CD8-positive, alpha-beta T cell (primary cell): ENCODE measurements at regions of chr7 and their contacts with region 1.

Region 1: GRCh38 chr7:30041521-30042269 is 13.5 kb downstream of the PLEKHA8 start:
- DNase-seq: no peak
- ATAC-seq: no peak
- H3K4me3 ChIP-seq: no peak overlapping the region
- H3K4me3 Mint-ChIP-seq: no peak overlapping the region
- H3K27ac ChIP-seq: no peak overlapping the region
- H3K27ac Mint-ChIP-seq: peak overlapping the region; percentile 12
- H3K4me1 ChIP-seq: no peaks in the 10 kb centered on the region
- H3K4me1 Mint-ChIP-seq: peaks cover 17% of the 10 kb centered on the region
- H3K27me3 ChIP-seq: no peaks in the 10 kb centered on the region
- H3K27me3 Mint-ChIP-seq: no peaks in the 10 kb centered on the region
- CTCF ChIP-seq: no peak

Region 2: DNA sequence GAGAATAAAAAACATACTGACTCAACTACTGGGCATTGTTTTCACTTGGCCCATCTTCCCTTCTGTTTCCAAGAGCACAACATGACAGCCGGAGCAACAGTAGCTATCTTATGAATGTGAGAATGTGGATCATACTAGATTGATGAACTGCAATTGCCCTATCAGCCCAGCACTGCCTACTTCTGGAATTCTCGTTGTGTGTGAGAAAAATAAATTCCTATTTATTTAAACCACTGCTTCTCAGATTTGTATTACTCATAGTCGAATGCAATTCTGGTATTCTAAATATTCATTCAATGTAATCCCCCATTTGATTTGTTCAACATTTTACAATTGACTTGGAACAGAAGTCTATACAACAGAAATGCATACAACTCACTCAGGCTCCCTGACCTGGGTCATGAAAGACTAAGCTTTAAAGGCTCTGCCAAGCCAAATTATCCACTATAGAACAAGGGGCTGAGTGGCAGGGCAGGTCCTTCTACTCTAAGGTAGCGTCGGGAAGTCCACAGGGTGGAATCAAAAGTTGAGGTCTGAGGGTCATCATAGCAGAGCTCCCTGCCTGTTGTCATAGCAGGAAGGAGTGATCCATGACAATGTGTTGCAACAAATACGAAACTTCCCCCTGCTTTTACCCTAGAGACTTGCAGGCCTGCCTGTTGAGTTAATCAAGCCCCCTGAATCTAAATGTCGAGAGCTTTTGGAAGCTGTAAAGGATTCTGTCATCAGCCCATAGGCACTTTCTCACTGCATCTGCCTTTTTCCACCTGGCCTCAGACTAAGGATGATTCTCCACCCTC is 1848.7 kb before region 1 on chr7:
- CTCF ChIA-PET with region 1: no interaction called
- POLR2A ChIA-PET with region 1: no interaction called
- intact Hi-C with region 1: loop called in 1 of 2 experiments (anchors 10 kb)
- DNase-seq: no peak
- ATAC-seq: no peak
- H3K4me3 ChIP-seq: no peak overlapping the region
- H3K4me3 Mint-ChIP-seq: no peak overlapping the region
- H3K27ac ChIP-seq: no peak overlapping the region
- H3K27ac Mint-ChIP-seq: no peak overlapping the region
- H3K4me1 ChIP-seq: no peaks in the 10 kb centered on the region
- H3K4me1 Mint-ChIP-seq: peaks cover 5% of the 10 kb centered on the region
- H3K27me3 ChIP-seq: no peaks in the 10 kb centered on the region
- H3K27me3 Mint-ChIP-seq: no peaks in the 10 kb centered on the region
- CTCF ChIP-seq: no peak